ENCODE measurements at regions of chr1 and their contacts with region 1.

Region 1: DNA sequence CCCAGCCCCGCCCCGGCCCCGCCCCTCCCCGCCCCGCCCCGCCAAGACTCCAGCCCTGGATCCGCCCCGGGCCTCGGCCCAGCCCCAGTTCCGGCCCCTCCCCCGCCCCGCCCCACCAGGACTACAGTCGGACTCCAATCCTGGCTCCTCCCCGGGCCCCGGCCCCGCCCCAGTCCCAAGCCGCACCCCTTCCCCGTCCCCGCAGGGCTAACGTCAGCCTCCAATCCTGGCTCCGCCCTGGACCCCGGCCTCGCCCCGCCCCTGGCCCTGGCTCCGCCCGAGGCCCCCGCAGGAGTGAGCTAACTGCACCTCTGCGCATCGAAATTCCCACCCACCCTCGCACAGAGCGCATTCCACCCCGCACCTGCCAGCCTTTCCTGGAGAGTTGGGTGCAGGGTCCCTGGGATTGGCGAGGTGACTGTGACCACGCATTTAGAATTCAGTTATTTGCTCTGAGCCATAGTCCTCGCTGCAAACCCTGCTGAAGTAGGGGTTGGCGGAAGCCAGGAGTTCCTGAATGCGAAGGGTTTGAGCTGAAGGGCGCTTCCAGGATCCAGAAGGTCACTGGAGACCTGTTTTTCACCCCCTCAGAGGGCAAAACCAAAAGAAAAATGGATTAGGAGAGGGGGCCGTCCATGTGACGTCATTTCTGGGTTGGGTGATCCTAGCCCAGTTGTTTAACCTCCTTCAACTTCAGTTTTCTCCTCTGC is 588 bp upstream of the IGSF8 start:
- DNase-seq: peak; percentile 94 to 98 (median 96)
- ATAC-seq: peak; percentile 90
- H3K4me3 ChIP-seq: peak overlapping the region; percentile 85
- H3K4me3 Mint-ChIP-seq: peak overlapping the region; percentile 74 to 95 (median 86)
- H3K27ac ChIP-seq: peak overlapping the region; percentile 96
- H3K27ac Mint-ChIP-seq: peak overlapping the region; percentile 88 to 99 (median 97)
- H3K4me1 ChIP-seq: peaks cover 28 to 49% of the 10 kb centered on the region in 2 donors
- H3K4me1 Mint-ChIP-seq: peaks cover 36 to 84% (median 64%) of the 10 kb centered on the region in 7 donors
- H3K27me3 ChIP-seq: no peaks in the 10 kb centered on the region
- H3K27me3 Mint-ChIP-seq: no peaks in the 10 kb centered on the region

Region 2: DNA sequence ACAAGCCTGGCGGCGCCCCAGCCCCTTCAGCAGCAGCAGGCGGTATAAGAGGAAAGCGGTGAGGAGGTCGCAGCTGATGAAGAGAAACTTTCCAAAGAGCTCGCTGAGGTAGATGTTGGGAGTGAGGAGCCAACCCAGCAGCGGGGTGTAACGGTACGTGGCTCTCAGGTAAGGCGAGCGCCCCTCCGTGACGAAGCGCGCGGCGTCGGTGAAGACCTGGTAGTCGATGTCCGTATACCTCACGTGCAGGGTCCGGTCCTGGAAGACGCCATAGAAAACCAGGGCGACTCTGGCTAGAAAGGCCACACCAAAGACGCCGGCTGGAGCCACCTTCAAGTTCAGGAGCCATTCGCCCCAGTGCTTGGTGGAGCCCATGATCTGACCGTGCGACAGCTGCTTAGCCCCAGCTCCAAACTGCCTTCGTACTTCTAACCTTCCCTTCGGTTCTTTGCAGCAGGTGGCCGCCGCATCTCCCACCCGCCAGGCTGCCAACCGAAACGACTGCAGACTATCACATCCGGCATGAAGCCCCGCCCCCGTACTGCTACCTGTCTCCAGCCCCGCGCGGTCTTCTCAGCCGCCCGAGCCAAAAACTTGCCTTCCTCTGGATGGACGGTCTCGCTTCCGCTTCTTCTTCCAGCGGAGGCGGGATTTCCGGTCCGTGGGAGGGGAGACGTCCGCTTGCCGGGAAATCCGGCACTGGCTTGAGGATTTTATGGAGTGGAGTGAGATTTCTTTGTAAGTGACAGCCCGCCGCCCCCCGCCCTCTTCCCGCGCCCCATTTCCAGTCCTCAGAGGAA is 67.4 kb before region 1 on chr1 and contains the start of gene PIGM:
- CTCF ChIA-PET with region 1: no interaction called
- POLR2A ChIA-PET with region 1: interaction called, 6 read pairs
- intact Hi-C with region 1: loop called (anchors 1 kb)
- DNase-seq: peak; percentile 73 to 91 (median 90)
- ATAC-seq: peak; percentile 98
- H3K4me3 ChIP-seq: peak within 1 kb of the TSS; percentile 68
- H3K4me3 Mint-ChIP-seq: peak within 1 kb of the TSS; percentile 90 to 100 (median 98)
- H3K27ac ChIP-seq: peak within 1 kb of the TSS; percentile 69
- H3K27ac Mint-ChIP-seq: peak within 1 kb of the TSS; percentile 69 to 96 (median 89)
- H3K4me1 ChIP-seq: peaks cover 12 to 14% of the 10 kb centered on the region in 2 donors
- H3K4me1 Mint-ChIP-seq: peaks cover 30 to 56% (median 45%) of the 10 kb centered on the region in 7 donors
- H3K27me3 ChIP-seq: no peaks in the 10 kb centered on the region
- H3K27me3 Mint-ChIP-seq: peaks cover 0 to 18% (median 0%) of the 10 kb centered on the region in 5 donors
- total RNA-seq, gene PIGM: 4.0 to 11.4 (median 7.0) TPM

Region 3: GRCh38 chr1:160193091-160193819 is 94.2 kb after region 1 on chr1:
- CTCF ChIA-PET with region 1: interaction called, 3 read pairs
- POLR2A ChIA-PET with region 1: no interaction called
- intact Hi-C with region 1: loop called in 1 of 2 experiments (anchors 1 kb)
- DNase-seq: peak; percentile 34 to 84 (median 70)
- ATAC-seq: peak; percentile 92
- H3K4me3 ChIP-seq: no peak overlapping the region
- H3K4me3 Mint-ChIP-seq: no peak overlapping the region
- H3K27ac ChIP-seq: no peak overlapping the region
- H3K27ac Mint-ChIP-seq: no peak overlapping the region
- H3K4me1 ChIP-seq: no peaks in the 10 kb centered on the region
- H3K4me1 Mint-ChIP-seq: peaks cover 0 to 2% (median 0%) of the 10 kb centered on the region in 7 donors
- H3K27me3 ChIP-seq: no peaks in the 10 kb centered on the region
- H3K27me3 Mint-ChIP-seq: peaks cover 0 to 5% (median 0%) of the 10 kb centered on the region in 5 donors

Region 4: DNA sequence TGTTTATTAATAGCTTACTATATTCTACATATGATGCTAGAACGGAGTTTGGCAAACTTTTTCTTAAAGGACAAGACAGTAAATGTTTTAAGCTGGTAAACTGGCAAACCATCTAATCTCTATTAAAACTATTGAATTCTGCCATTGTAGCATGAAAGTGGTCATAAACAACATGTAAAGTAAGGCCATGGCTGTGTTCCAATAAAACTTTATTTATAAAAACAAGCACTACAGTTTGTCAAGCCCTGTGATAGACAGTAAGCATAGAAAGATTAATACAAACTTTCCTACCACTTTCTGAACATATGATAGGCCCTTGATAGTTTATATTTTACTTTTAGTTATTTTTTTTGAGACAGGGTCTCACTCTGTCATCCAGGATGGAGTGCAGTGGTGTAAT is 128.6 kb after region 1 on chr1:
- CTCF ChIA-PET with region 1: no interaction called
- POLR2A ChIA-PET with region 1: no interaction called
- intact Hi-C with region 1: no loop called
- DNase-seq: no peak
- ATAC-seq: no peak
- H3K4me3 ChIP-seq: no peak overlapping the region
- H3K4me3 Mint-ChIP-seq: no peak overlapping the region
- H3K27ac ChIP-seq: no peak overlapping the region
- H3K27ac Mint-ChIP-seq: peak overlapping the region in 1 of 9 donors; percentile 12
- H3K4me1 ChIP-seq: no peaks in the 10 kb centered on the region
- H3K4me1 Mint-ChIP-seq: no peaks in the 10 kb centered on the region
- H3K27me3 ChIP-seq: no peaks in the 10 kb centered on the region
- H3K27me3 Mint-ChIP-seq: no peaks in the 10 kb centered on the region

Region 5: GRCh38 chr1:160261893-160262794 is 163.1 kb after region 1 on chr1 and contains the start of gene DCAF8:
- CTCF ChIA-PET with region 1: interaction called, 6 read pairs
- POLR2A ChIA-PET with region 1: interaction called, 14 read pairs
- intact Hi-C with region 1: loop called (anchors 1 to 2 kb)
- DNase-seq: peak; percentile 92 to 97 (median 96)
- ATAC-seq: peak; percentile 96
- H3K4me3 ChIP-seq: peak within 1 kb of the TSS; percentile 66
- H3K4me3 Mint-ChIP-seq: peak within 1 kb of the TSS; percentile 82 to 100 (median 97)
- H3K27ac ChIP-seq: peak within 1 kb of the TSS; percentile 93
- H3K27ac Mint-ChIP-seq: peak within 1 kb of the TSS; percentile 94 to 100 (median 96)
- H3K4me1 ChIP-seq: peaks cover 22 to 29% of the 10 kb centered on the region in 2 donors
- H3K4me1 Mint-ChIP-seq: peaks cover 23 to 59% (median 45%) of the 10 kb centered on the region in 7 donors
- H3K27me3 ChIP-seq: no peaks in the 10 kb centered on the region
- H3K27me3 Mint-ChIP-seq: peaks cover 0 to 3% (median 0%) of the 10 kb centered on the region in 5 donors
- total RNA-seq, gene DCAF8: 115 to 226 (median 176) TPM

Region 6: DNA sequence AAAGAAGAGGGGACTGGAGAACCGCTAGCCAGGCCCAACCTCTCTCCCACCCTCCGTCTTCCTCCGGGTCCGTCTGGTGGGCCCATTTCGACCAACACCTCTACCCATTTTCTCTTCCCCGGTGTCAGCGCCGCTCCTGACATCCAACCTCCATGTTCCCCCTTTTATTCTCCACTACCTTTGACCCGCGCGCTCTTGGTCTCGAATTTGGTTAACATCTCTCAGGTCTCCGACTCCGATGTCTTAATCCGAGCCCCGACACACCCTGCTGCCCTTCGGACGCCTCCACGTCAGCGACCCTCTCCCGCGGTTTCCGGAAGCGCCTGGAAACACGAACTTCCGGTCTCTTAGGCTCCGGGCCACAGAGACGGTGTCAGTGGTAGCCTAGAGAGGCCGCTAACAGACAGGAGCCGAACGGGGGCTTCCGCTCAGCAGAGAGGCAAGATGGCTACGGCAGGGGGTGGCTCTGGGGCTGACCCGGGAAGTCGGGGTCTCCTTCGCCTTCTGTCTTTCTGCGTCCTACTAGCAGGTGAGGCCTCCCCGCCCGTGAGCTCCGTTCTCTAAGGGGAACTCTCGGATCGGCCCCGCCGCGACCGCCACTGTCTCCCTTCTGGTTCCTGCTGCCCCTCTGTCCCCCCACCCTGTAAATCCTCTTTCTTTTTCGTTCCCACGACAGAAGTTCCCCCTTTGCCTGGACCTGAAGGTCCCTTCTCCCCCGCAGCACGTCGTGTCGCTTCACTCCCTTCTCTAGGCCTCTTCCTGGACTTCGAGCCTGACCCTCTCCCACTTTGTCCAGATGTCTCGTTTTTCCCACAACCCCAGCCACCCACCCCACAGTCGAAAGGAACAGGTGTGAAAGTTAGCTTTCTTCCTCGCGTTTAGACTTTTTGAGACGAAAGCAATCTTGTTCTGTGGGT is 244.2 kb after region 1 on chr1 and contains the starts of genes COPA and NCSTN:
- CTCF ChIA-PET with region 1: interaction called, 3 read pairs
- POLR2A ChIA-PET with region 1: no interaction called
- intact Hi-C with region 1: loop called (anchors 2 kb)
- DNase-seq: peak; percentile 67 to 93 (median 86)
- ATAC-seq: peak; percentile 98
- H3K4me3 ChIP-seq: peak within 1 kb of the TSS; percentile 87
- H3K4me3 Mint-ChIP-seq: peak within 1 kb of the TSS; percentile 99 to 100 (median 100)
- H3K27ac ChIP-seq: peak within 1 kb of the TSS; percentile 98
- H3K27ac Mint-ChIP-seq: peak within 1 kb of the TSS; percentile 98 to 100 (median 100)
- H3K4me1 ChIP-seq: peaks cover 23 to 29% of the 10 kb centered on the region in 2 donors
- H3K4me1 Mint-ChIP-seq: peaks cover 32 to 78% (median 66%) of the 10 kb centered on the region in 7 donors
- H3K27me3 ChIP-seq: no peaks in the 10 kb centered on the region
- H3K27me3 Mint-ChIP-seq: no peaks in the 10 kb centered on the region
- total RNA-seq, gene COPA: 104 to 151 (median 118) TPM
- total RNA-seq, gene NCSTN: 68.4 to 91.1 (median 73.5) TPM

Measured in naive thymus-derived CD4-positive, alpha-beta T cell (primary cell).